Left cardiac atrium (tissue), 4 donors: ENCODE measurements at regions of chr4 and their contacts with region 1.

Region 1: DNA sequence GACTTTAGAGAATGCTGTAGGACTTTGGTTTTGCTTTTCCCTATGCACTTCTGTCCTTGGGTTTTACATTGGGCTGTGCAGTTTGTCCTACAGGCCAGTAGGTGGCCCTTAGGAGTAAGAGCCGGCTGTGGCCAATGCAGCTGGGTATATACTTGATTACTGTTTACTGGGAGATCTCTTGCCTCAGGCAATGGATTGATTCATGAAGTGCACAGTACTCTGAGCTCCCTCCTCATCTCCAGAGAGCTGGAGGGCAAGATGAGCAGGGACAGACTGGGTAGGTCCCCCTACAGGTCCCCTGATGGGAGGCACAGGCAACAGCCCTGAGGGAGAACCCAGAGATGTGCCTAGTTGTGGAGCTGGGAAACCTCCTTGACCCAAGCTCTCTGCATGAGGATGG is 103.8 kb upstream of the QRFPR start:
- DNase-seq: peak; percentile 40
- ATAC-seq: peak; percentile 57 to 72

Region 2: DNA sequence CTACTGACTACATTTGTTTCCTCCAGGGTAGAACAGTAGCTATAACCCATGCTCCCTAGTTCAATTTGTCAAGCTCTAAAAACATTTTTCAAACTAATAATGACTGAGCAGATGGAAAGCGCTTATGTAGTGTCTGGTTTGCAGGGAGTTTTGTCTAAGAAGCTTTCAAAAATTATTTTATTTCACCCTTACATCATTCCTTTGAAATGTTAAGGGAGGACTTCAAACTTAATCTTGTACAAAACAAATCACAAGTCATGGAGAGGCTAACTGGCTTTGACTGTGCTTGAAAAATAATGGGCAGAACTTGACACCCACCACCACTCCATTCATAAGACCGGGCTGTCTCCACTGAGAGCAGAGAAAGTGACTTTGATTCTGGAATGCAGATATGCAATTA is 49.6 kb after region 1 on chr4:
- intact Hi-C with region 1: no loop called
- DNase-seq: no peak
- ATAC-seq: peak in 1 of 2 donors; percentile 45

Region 3: DNA sequence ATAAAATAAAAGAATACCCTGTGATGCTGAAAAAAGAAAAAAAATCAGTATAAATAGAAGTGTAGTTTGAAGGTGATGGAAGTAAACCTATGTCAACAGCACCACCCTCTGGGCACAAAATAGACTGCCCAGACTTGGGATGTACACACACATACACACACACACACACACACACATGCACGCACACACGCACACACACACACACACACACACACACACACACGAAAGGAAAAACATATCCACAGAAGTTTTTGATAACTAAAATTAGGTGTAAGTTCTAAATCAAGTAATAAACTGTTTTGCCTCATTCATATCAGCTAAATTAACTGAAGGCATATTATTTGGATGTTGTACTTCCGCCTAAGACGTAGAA is 171.6 kb after region 1 on chr4:
- intact Hi-C with region 1: loop called in 1 of 2 experiments (anchors 5 kb)
- DNase-seq: peak; percentile 58
- ATAC-seq: peak; percentile 76 to 87